ENCODE measurements at regions of chr1 and their contacts with region 1.

Region 1: GRCh38 chr1:32948905-32949304 is 15.7 kb downstream of the RNF19B start:
- DNase-seq: no peak
- ATAC-seq: peak in 1 of 4 donors; percentile 51
- H3K4me3 ChIP-seq: no peak overlapping the region
- H3K27ac ChIP-seq: no peak overlapping the region
- H3K4me1 ChIP-seq: peaks cover 14% of the 10 kb centered on the region
- H3K27me3 ChIP-seq: no peaks in the 10 kb centered on the region
- CTCF ChIP-seq: no peak

Region 2: DNA sequence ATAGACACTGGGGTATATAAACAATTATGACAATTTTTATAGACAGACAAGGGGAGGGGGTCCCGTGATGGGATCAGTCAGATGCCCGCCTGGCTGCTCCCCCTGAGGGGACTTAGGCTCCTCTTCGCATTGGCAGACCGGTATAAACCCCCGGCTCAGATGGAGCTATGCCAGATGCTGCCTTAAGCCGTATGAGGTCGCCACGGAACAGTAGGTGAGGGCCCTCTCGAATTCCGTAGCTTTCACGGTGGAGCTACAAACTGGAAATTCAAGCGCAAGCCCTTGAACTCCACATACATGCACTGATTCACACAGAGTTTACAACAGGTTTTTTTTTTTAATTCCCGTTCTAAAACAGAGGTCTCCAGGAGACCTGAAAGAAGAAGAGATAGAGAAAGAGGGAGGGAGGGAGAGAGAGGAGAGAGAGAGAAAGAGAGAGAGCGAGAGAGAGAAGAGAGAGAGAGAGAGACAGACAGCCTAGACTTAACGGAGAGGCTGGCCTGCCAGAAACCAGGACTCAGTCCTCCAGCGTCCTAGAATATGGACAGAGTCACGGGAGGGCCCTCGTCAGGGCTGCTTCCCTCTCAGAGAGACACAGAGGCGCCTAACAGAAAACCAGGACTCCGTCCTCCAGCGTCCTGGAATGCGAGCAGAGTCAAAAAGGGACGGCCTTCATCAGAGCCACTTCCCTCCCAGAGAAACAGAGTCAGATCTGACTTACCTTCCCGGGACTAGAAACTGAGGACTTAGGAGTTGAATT is 23.3 kb before region 1 on chr1:
- intact Hi-C with region 1: loop called in 1 of 2 experiments (anchors 1 kb)
- DNase-seq: no peak
- ATAC-seq: no peak
- H3K4me3 ChIP-seq: no peak overlapping the region
- H3K27ac ChIP-seq: no peak overlapping the region
- H3K4me1 ChIP-seq: peaks cover 6% of the 10 kb centered on the region
- H3K27me3 ChIP-seq: peaks cover 0 to 19% (median 12%) of the 10 kb centered on the region in 3 donors
- CTCF ChIP-seq: no peak

Region 3: GRCh38 chr1:33055210-33056008 is 106.5 kb after region 1 on chr1:
- intact Hi-C with region 1: loop called in 1 of 2 experiments (anchors 5 kb)
- DNase-seq: peak; percentile 79 to 88
- ATAC-seq: peak; percentile 90 to 92 (median 91)
- H3K4me3 ChIP-seq: no peak overlapping the region
- H3K27ac ChIP-seq: peak overlapping the region; percentile 59
- H3K4me1 ChIP-seq: no peaks in the 10 kb centered on the region
- H3K27me3 ChIP-seq: no peaks in the 10 kb centered on the region
- CTCF ChIP-seq: peak; percentile 75

Measured in psoas muscle (tissue), 8 donors.